Activated CD8-positive, alpha-beta T cell treated with anti-CD3 and anti-CD28 coated beads for 36 hours (primary cell): ENCODE measurements at regions of chr14 and their contacts with region 1.

Region 1: DNA sequence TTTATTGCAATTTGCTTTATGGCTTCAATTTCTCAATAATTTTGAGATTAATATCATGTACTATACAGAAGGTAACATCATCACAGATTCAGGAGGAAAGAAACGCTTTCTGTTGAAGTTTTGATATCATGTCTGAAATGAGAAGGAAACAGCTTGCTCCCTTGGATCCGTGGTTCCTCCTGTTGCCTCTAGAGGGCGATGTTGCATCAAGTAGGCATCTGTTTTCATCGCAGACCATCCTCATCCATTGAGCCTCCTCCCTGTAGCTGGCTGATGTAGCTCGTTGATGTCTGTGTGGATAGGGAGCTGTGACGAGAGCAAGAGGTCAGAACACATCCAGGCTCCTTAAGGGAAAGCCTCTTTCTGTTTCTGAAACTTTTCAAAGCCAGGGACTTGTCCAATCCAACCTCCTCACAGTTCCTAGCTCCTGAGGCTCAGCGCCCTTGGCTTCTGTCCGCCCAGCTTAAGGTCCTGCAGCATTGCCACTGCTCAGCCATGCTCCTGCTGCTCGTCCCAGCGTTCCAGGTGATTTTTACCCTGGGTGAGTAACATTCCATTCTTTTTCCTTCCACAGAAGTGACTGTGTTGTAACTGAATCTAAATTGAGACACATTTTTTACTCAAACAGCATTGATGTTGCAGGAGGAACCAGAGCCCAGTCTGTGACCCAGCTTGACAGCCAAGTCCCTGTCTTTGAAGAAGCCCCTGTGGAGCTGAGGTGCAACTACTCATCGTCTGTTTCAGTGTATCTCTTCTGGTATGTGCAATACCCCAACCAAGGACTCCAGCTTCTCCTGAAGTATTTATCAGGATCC is 304.8 kb upstream of the OR4E1 start:
- DNase-seq: peak; percentile 78
- ATAC-seq: peak; percentile 78
- H3K4me3 Mint-ChIP-seq: peak overlapping the region; percentile 78
- H3K27ac Mint-ChIP-seq: peak overlapping the region; percentile 63
- H3K4me1 Mint-ChIP-seq: peaks cover 21% of the 10 kb centered on the region
- H3K27me3 Mint-ChIP-seq: no peaks in the 10 kb centered on the region
- CTCF ChIP-seq: peak; percentile 67

Region 2: GRCh38 chr14:21924479-21924878 is 53.9 kb before region 1 on chr14:
- CTCF ChIA-PET with region 1: interaction called, 33 read pairs
- POLR2A ChIA-PET with region 1: interaction called, 5 read pairs
- intact Hi-C with region 1: loop called (anchors 5 kb)
- DNase-seq: peak; percentile 78
- ATAC-seq: peak; percentile 80
- H3K4me3 Mint-ChIP-seq: peak overlapping the region; percentile 36
- H3K27ac Mint-ChIP-seq: peak overlapping the region; percentile 94
- H3K4me1 Mint-ChIP-seq: peaks cover 44% of the 10 kb centered on the region
- H3K27me3 Mint-ChIP-seq: no peaks in the 10 kb centered on the region
- CTCF ChIP-seq: no peak

Region 3: DNA sequence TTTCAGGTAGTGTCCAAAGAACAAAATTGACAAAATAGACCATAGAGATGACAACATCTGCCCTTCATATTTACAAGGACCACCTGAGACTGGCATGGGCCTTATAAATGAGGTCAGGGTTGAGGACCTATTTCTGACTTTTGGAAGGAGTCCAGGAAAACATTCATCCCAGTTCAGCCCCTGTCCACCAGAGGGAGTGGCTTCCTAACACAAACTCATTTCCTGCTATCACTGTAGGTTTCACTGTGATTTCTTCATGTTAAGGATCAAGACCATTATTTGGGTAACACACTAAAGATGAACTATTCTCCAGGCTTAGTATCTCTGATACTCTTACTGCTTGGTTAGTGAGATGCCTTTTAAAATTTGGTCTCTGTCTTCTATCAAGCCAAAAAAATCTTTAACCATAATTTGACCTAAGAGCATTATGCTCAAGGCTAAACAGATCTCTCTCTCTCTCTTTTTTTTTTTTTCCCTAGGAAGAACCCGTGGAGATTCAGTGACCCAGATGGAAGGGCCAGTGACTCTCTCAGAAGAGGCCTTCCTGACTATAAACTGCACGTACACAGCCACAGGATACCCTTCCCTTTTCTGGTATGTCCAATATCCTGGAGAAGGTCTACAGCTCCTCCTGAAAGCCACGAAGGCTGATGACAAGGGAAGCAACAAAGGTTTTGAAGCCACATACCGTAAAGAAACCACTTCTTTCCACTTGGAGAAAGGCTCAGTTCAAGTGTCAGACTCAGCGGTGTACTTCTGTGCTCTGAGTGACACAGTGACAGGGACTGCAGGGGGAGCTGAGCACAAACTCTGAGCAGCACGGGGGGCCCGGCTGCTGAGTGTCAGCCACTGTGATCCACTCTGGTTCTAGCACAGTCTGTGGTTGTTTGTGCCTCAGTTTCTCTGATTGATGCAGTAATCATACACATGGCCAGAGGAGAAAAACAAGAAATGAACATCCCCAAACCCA is 37.2 kb before region 1 on chr14:
- CTCF ChIA-PET with region 1: interaction called, 16 read pairs
- POLR2A ChIA-PET with region 1: no interaction called
- intact Hi-C with region 1: no loop called
- DNase-seq: peak; percentile 62
- ATAC-seq: peak; percentile 87
- H3K4me3 Mint-ChIP-seq: peak overlapping the region; percentile 73
- H3K27ac Mint-ChIP-seq: peak overlapping the region; percentile 83
- H3K4me1 Mint-ChIP-seq: peaks cover 25% of the 10 kb centered on the region
- H3K27me3 Mint-ChIP-seq: no peaks in the 10 kb centered on the region
- CTCF ChIP-seq: peak; percentile 54

Region 4: GRCh38 chr14:21965042-21965441 is 13.3 kb before region 1 on chr14:
- CTCF ChIA-PET with region 1: interaction called, 20 read pairs
- POLR2A ChIA-PET with region 1: no interaction called
- intact Hi-C with region 1: no loop called
- DNase-seq: peak; percentile 72
- ATAC-seq: peak; percentile 96
- H3K4me3 Mint-ChIP-seq: peak overlapping the region; percentile 59
- H3K27ac Mint-ChIP-seq: peak overlapping the region; percentile 72
- H3K4me1 Mint-ChIP-seq: peaks cover 14% of the 10 kb centered on the region
- H3K27me3 Mint-ChIP-seq: no peaks in the 10 kb centered on the region
- CTCF ChIP-seq: no peak

Region 5: DNA sequence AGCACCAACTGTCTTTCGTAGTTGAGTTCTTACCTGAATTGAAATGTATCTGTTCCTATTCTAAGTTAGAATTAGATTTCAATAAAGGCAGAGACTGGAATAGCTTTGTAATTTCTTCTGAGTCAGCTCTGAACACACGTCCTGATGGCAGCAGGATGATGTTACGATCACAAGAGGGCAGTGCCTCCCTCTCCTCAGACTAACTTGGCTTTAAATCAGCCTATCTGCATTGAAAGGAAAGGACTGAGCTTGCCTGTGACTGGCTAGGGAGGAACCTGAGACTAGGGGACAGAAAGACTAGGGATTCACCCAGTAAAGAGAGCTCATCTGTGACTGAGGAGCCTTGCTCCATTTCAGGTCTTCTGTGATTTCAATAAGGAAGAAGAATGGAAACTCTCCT is 18.9 kb after region 1 on chr14:
- CTCF ChIA-PET with region 1: interaction called, 37 read pairs
- POLR2A ChIA-PET with region 1: interaction called, 3 read pairs
- intact Hi-C with region 1: no loop called
- DNase-seq: peak; percentile 66
- ATAC-seq: peak; percentile 88
- H3K4me3 Mint-ChIP-seq: peak overlapping the region; percentile 95
- H3K27ac Mint-ChIP-seq: peak overlapping the region; percentile 96
- H3K4me1 Mint-ChIP-seq: peaks cover 20% of the 10 kb centered on the region
- H3K27me3 Mint-ChIP-seq: no peaks in the 10 kb centered on the region
- CTCF ChIP-seq: peak; percentile 33

Region 6: GRCh38 chr14:22002860-22003309 is 24.5 kb after region 1 on chr14:
- CTCF ChIA-PET with region 1: interaction called, 33 read pairs
- POLR2A ChIA-PET with region 1: no interaction called
- intact Hi-C with region 1: no loop called
- DNase-seq: peak; percentile 86
- ATAC-seq: peak; percentile 79
- H3K4me3 Mint-ChIP-seq: peak overlapping the region; percentile 81
- H3K27ac Mint-ChIP-seq: peak overlapping the region; percentile 92
- H3K4me1 Mint-ChIP-seq: peaks cover 17% of the 10 kb centered on the region
- H3K27me3 Mint-ChIP-seq: no peaks in the 10 kb centered on the region
- CTCF ChIP-seq: peak; percentile 58

Region 7: DNA sequence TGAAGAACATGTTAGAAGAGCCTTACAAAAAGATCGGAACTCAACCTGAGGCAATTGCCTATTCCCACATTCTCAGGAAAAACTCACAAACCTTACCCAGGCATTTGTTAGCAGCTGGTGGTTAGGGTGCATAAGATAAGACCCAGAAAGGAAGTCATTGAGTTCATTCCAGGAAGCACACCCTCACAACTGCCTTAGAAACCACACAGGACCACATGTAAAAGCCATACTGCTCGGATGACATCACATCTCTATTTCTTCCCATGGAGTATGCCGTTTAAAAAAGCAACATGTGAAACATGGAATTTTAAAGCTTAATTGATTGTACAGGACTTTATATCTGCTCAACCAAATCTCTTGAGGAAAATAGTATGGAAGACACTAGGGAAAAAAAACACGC is 199.5 kb after region 1 on chr14:
- CTCF ChIA-PET with region 1: no interaction called
- POLR2A ChIA-PET with region 1: no interaction called
- intact Hi-C with region 1: no loop called
- DNase-seq: no peak
- ATAC-seq: peak; percentile 51
- H3K4me3 Mint-ChIP-seq: no peak overlapping the region
- H3K27ac Mint-ChIP-seq: no peak overlapping the region
- H3K4me1 Mint-ChIP-seq: peaks cover 14% of the 10 kb centered on the region
- H3K27me3 Mint-ChIP-seq: no peaks in the 10 kb centered on the region
- CTCF ChIP-seq: no peak